ENCODE measurements at regions of chr9 and their contacts with region 1.

Region 1: GRCh38 chr9:130117816-130118632 is 54.2 kb upstream of the NCS1 start:
- DNase-seq: no peak
- ATAC-seq: no peak
- H3K4me3 Mint-ChIP-seq: no peak overlapping the region
- H3K27ac Mint-ChIP-seq: peak overlapping the region; percentile 3
- H3K4me1 Mint-ChIP-seq: peaks cover 9% of the 10 kb centered on the region
- H3K27me3 Mint-ChIP-seq: no peaks in the 10 kb centered on the region
- CTCF ChIP-seq: no peak

Region 2: DNA sequence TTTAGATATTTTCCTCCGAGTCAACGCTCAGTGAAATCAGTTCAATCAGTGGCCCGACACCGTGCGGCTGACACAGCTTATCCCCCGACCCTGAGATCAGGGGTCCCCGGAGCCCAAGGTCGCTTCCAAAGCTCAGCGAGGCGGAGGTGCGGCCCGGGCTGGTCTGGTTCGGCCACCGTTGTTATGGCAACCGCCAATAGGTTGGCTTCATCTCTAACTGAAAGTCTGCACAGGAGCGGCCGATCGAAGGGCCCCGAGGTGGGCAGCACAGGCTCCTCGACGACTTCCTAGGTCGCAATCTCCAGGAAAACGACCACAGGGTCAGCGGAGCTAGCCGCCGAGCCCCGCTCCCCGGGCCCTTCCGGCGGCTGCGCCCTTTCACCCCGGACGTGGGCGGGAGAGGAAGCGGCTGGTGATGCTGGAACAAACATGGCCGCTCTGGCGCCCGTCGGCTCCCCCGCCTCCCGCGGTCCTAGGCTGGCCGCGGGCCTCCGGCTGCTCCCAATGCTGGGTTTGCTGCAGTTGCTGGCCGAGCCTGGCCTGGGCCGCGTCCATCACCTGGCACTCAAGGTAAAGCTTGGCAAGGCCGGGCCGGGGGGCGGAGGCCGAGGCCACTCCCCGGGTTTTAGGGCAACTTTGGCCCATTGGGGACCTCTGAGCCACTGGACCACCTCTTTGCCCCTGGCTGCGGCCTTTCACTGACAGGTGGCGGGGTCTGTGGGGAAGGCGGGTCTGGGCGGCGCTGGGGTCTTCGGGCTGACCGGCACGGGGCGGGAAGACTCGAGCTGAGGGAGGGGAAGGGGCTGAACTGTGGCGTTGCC is 64.3 kb before region 1 on chr9 and contains the start of gene GPR107:
- CTCF ChIA-PET with region 1: no interaction called
- POLR2A ChIA-PET with region 1: no interaction called
- intact Hi-C with region 1: no loop called
- DNase-seq: peak; percentile 73
- ATAC-seq: peak; percentile 96
- H3K4me3 Mint-ChIP-seq: peak within 1 kb of the TSS; percentile 91
- H3K27ac Mint-ChIP-seq: peak within 1 kb of the TSS; percentile 80
- H3K4me1 Mint-ChIP-seq: peaks cover 30% of the 10 kb centered on the region
- H3K27me3 Mint-ChIP-seq: no peaks in the 10 kb centered on the region
- CTCF ChIP-seq: no peak
- total RNA-seq, gene GPR107: 17.7 and 19.6 TPM in 2 replicates

Region 3: GRCh38 chr9:130143958-130144366 is 25.9 kb after region 1 on chr9:
- CTCF ChIA-PET with region 1: no interaction called
- POLR2A ChIA-PET with region 1: interaction called, 11 read pairs
- intact Hi-C with region 1: no loop called
- DNase-seq: no peak
- ATAC-seq: no peak
- H3K4me3 Mint-ChIP-seq: no peak overlapping the region
- H3K27ac Mint-ChIP-seq: no peak overlapping the region
- H3K4me1 Mint-ChIP-seq: peaks cover 13% of the 10 kb centered on the region
- H3K27me3 Mint-ChIP-seq: peaks cover 31% of the 10 kb centered on the region
- CTCF ChIP-seq: no peak